Mammary epithelial cell (primary cell): ENCODE measurements at regions of chr3 and their contacts with region 1.

Region 1: GRCh38 chr3:58994746-58995330 is 55.0 kb downstream of the CFAP20DC start:
- DNase-seq: peak; percentile 69
- H3K4me3 ChIP-seq: peak overlapping the region in 1 of 3 experiments; percentile 4
- H3K27ac ChIP-seq: peak overlapping the region; percentile 60
- H3K4me1 ChIP-seq: peaks cover 40% of the 10 kb centered on the region
- H3K27me3 ChIP-seq: no peaks in the 10 kb centered on the region
- CTCF ChIP-seq: peak; percentile 83 to 89

Region 2: DNA sequence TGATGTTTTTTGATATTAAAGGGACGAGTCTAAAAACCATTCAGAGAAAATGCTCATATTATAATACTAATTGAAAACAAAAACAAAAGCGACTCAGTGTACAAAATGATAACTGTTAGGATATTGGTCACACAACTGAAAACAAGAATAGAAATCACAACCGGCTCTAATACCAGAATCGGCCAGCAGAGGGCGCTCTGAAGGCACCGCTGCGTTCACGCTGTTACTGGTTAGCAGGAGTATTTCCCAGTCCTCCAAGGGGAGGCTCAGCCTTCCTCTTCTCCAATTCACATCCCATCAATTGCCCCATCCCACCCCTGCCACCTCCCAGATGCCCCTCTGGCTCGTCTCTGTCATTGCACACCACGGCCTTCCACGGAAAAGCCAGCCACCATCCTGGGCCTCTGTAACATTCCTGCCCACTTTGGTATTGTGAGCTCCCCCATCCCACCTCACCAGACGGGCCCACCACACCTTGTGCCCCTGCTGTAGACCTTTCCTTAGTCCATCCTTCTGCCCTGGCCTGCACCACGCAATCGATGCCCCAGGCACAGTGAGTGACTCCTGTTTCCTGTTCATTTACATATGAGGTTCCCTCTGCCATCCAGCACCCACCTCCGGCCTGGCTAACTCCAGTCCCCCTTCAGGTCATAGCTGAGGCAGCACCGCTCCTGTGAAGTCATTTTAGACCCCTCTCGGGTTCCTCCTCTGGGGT is 426.1 kb before region 1 on chr3:
- CTCF ChIA-PET with region 1: interaction called, 20 read pairs
- dilution Hi-C with region 1: no loop called
- in situ Hi-C with region 1: no loop called
- intact Hi-C with region 1: no loop called
- DNase-seq: peak; percentile 45
- H3K4me3 ChIP-seq: no peak overlapping the region
- H3K27ac ChIP-seq: no peak overlapping the region
- H3K4me1 ChIP-seq: peaks cover 21% of the 10 kb centered on the region
- H3K27me3 ChIP-seq: no peaks in the 10 kb centered on the region
- CTCF ChIP-seq: peak; percentile 87 to 88

Region 3: DNA sequence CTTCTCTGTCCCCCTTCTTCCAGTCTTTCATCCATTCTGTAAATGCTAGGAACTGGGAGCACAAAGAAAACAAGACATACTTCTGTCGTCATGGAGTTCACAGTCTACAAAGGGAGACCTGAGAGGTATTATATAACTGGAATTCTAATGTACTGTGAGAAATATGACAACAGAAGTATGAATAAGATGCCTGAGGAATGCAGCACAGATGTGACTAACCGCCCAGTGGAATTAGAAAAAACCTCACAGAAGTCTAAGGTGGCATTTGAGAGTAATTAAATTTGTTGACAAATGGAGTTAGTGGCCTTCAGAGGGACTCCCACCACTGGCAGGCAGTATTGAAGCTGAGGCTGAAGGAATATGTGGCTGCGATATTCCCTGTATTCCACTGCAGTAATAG is 159.8 kb before region 1 on chr3:
- CTCF ChIA-PET with region 1: no interaction called
- dilution Hi-C with region 1: no loop called
- in situ Hi-C with region 1: loop called in 1 of 2 experiments (anchors 25 kb)
- intact Hi-C with region 1: no loop called
- DNase-seq: peak; percentile 52
- H3K4me3 ChIP-seq: no peak overlapping the region
- H3K27ac ChIP-seq: peak overlapping the region; percentile 13
- H3K4me1 ChIP-seq: peaks cover 11% of the 10 kb centered on the region
- H3K27me3 ChIP-seq: no peaks in the 10 kb centered on the region
- CTCF ChIP-seq: no peak

Region 4: DNA sequence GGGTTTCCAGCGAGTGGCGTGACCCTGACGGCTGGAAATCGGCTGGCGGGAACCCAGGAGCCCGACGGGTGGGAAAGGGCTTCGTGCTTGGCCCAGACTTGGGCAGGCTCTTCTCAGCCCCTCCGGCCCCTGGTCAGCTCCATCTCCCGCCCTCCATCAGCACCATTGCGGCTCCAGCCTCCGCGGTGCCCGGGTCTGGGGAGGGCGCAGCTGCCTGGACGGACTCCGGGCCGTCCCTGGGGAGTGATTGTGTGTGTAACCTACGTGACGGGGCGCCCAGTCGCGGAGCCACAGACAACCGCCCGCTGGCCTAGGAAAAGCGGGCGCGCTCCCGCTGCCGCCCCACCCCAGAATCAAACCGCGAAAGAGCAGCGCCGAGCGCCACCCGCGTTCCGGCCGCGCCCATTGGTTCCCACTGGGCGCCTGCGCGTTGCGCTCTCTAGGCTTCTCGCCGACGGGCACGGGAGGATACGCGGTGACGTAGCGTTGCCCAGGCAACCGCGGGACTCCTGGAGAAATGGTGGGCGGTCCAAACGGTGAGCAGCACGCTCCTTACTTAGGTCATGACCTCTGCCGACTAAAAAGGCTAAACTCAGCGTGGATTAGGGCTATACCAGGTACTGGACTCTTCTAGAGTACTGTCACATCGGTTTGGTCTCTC is 55.0 kb after region 1 on chr3 and contains the start of gene CFAP20DC:
- CTCF ChIA-PET with region 1: interaction called, 6 read pairs
- dilution Hi-C with region 1: no loop called
- in situ Hi-C with region 1: loop called in 1 of 2 experiments (anchors 10 kb)
- intact Hi-C with region 1: loop called (anchors 1 kb)
- DNase-seq: peak; percentile 96
- H3K4me3 ChIP-seq: peak within 1 kb of the TSS; percentile 49 to 87 (median 63)
- H3K27ac ChIP-seq: peak within 1 kb of the TSS; percentile 95
- H3K4me1 ChIP-seq: peaks cover 15% of the 10 kb centered on the region
- H3K27me3 ChIP-seq: no peaks in the 10 kb centered on the region
- CTCF ChIP-seq: peak in 1 of 2 donors; percentile 2
- total RNA-seq, gene CFAP20DC: 3.0 to 9.9 TPM

Region 5: DNA sequence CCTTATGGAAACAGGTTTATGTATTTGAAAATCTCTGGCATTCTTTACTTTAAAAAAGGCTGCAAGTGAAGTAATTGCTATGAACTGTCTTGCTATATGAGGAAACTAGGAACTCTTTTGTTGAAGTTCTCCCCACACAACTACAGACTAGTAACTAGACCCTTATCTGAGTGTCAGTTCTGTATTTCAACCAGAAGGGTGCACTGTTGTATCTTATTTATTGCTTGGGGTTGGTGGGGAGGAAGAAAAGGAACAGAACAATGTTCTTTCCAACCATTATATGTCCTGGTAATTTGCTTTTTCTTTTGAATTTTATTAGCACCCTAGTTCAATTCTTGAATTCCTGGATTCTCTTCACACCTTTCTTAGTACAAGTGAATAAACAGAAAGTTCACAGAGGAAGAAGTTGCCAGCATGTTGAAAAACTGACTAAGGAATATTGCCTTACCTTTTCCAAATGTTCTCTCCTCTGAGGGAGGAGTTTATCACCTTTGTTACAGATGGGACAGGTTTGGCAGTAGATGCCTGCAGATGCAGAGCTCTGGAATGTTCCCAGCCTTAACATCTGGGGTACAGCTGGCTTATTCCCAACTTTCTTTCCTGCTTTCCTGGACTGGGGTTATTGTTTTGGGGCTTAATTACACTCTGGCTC is 217.4 kb after region 1 on chr3:
- CTCF ChIA-PET with region 1: no interaction called
- dilution Hi-C with region 1: no loop called
- in situ Hi-C with region 1: loop called in 1 of 2 experiments (anchors 10 kb)
- intact Hi-C with region 1: loop called (anchors 1 kb)
- DNase-seq: peak; percentile 62
- H3K4me3 ChIP-seq: no peak overlapping the region
- H3K27ac ChIP-seq: peak overlapping the region; percentile 40
- H3K4me1 ChIP-seq: peaks cover 12% of the 10 kb centered on the region
- H3K27me3 ChIP-seq: no peaks in the 10 kb centered on the region
- CTCF ChIP-seq: peak; percentile 68 to 72

Region 6: DNA sequence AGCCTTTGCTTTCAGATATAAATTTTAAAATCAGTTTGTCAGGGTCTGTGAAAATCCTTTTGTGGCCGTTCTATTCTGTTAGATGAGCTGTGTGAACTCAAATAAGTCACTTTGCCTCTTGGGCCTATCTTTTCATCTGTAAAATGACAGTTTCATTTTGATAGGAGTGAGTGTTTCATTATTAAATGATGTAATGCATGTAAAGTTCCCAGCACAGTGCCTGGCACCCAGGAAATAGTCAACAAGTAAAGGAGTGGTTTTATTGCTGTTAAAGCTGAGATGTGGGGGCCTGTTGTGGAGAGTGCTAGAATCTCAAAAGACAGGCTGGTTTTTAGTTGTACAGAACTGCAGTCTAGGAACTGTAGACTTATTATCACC is 449.4 kb after region 1 on chr3:
- CTCF ChIA-PET with region 1: interaction called, 15 read pairs
- dilution Hi-C with region 1: no loop called
- in situ Hi-C with region 1: no loop called
- intact Hi-C with region 1: no loop called
- DNase-seq: no peak
- H3K4me3 ChIP-seq: no peak overlapping the region
- H3K27ac ChIP-seq: no peak overlapping the region
- H3K4me1 ChIP-seq: no peaks in the 10 kb centered on the region
- H3K27me3 ChIP-seq: no peaks in the 10 kb centered on the region
- CTCF ChIP-seq: no peak

Region 7: GRCh38 chr3:59857589-59858346 is 862.9 kb after region 1 on chr3:
- CTCF ChIA-PET with region 1: no interaction called
- dilution Hi-C with region 1: no loop called
- in situ Hi-C with region 1: no loop called
- intact Hi-C with region 1: loop called (anchors 2 kb)
- DNase-seq: peak; percentile 61
- H3K4me3 ChIP-seq: no peak overlapping the region
- H3K27ac ChIP-seq: no peak overlapping the region
- H3K4me1 ChIP-seq: peaks cover 4% of the 10 kb centered on the region
- H3K27me3 ChIP-seq: no peaks in the 10 kb centered on the region
- CTCF ChIP-seq: peak; percentile 87 to 96